AG04450 (cell line): ENCODE measurements at regions of chr6 and their contacts with region 1.

Region 1: GRCh38 chr6:32947552-32948465 is 5.1 kb downstream of the HLA-DMA start:
- DNase-seq: no peak
- H3K4me3 ChIP-seq: no peak overlapping the region
- H3K27ac ChIP-seq: no peak overlapping the region
- H3K27me3 ChIP-seq: no peaks in the 10 kb centered on the region
- CTCF ChIP-seq: peak; percentile 56

Region 2: DNA sequence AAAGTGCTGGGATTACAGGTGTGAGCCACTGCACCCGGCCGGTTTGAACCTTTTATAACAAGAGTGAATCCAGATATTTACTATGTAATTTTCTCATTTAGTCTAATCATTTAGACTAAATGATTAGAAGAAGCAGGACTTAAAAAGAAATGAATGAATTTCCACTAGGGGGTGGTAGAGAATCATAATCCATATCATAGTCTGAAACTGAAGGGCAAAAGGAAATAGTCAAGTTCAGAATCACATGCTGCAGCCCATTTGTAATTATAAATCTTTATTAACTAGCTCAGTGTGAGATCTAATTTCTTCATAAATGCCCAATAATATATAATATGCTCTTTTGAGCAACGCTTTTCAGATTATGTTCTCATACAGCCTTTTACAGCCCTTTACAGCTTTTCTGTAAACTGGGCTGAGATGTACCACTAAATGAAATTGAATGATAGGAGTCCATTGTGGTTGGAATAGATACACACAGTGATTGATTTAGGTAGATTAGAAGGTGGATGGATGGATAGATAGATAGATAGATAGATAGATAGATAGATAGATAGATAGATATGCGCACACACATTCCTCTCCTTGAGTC is 62.0 kb before region 1 on chr6:
- CTCF ChIA-PET with region 1: interaction called, 72 read pairs
- POLR2A ChIA-PET with region 1: no interaction called
- DNase-seq: no peak
- H3K4me3 ChIP-seq: no peak overlapping the region
- H3K27ac ChIP-seq: no peak overlapping the region
- H3K27me3 ChIP-seq: peaks cover 2% of the 10 kb centered on the region
- CTCF ChIP-seq: peak; percentile 63

Region 3: DNA sequence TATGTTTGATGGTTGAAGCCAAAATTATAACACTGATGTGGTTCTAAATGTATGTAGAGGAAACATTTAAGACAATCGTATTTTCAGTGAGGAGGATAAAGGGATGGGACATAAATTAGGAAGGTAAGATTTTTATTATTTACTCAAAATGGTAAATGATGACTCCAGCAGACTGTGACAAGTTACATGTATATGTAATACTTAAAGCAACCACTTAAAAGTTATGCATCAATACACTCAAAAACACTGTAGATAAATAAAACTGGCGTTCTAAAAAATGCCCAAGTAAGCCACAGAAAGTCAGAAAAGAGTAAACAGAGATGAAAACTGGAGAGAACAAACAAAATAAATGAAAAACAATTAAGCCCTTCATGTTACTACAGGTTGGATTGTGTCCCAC is 25.7 kb before region 1 on chr6:
- CTCF ChIA-PET with region 1: no interaction called
- POLR2A ChIA-PET with region 1: no interaction called
- DNase-seq: no peak
- H3K4me3 ChIP-seq: no peak overlapping the region
- H3K27ac ChIP-seq: no peak overlapping the region
- H3K27me3 ChIP-seq: peaks cover 18% of the 10 kb centered on the region
- CTCF ChIP-seq: no peak

Region 4: DNA sequence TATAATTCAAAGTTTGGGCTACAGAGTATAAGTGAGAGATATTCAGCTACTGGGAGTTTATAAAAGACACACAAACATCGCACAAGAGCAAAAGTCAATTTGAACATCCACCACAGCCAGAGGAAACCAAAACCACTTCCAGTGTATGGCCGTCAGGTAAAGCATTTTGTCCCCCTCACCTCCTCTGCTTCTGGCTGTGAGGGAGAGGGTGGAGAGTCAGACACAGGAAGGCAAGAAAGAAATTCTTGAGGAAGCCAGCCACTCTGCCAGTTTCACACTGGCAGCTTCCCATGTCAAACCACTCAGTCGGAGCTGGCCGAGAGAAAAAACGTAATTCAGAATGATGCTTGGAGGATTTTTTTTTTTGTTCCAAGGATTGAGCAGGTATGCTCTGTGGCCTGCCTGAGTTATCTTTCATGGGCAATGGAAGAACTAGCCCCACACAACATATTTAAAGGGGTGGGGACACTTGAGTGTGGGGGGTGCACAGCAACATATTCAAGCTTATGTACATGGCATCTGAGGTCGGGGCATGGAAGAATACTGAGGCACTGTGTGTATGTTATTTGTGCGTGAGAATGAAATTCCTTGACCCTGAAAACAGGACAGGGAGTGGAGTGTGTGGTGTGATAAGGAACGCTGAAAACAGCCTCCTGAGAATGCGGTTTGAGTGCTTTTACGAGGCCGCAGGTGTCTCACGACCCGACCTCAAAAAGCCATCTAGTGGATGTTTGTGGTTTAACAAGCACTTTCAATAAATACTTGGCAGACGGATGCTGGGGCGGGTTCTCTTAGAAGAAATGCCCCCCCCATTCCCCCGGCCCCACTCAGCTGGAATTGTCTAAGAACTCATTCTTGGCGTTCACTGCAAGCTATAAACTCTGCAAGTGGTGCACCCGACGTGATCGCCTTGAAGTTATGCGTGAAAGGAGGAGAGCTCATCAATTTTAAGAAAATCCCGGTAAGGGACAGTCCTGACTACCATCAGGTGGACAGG is 397.2 kb after region 1 on chr6:
- CTCF ChIA-PET with region 1: no interaction called
- POLR2A ChIA-PET with region 1: no interaction called
- DNase-seq: peak; percentile 39
- H3K4me3 ChIP-seq: no peak overlapping the region
- H3K27ac ChIP-seq: no peak overlapping the region
- H3K27me3 ChIP-seq: peaks cover 3% of the 10 kb centered on the region
- CTCF ChIP-seq: peak; percentile 57

Region 5: DNA sequence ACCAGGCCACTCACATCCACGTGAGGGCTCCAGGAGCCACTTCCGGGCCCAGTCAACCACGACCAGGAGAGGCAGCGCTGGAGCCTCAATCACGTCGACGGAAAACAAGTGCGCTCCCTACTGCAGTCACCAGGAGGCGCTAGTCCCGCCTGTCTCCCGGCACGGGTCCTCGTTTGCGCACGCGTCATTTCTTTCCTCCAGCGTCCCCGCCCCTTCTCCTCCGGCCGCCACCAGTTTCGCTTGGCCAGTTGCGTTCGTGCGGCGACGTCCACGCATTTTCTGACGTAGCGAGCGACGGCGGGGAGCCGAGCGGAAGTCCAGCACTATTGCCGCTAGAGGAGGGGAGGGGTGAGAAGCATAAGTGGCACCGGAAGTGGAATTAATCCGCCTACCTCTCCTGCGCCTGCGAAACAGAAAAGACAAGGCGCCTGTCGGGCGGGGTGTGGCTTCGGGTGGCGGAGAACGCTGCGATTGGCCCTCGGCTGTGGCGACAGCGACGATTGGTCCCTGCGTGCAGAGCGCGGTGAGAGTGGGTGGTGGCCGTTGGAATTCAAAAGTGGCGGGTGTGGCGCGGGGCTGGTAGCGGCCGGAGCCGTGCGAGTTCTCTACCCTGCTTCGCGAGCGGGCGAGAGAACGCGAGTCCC is 443.6 kb after region 1 on chr6 and contains the start of gene KIFC1:
- CTCF ChIA-PET with region 1: no interaction called
- POLR2A ChIA-PET with region 1: no interaction called
- DNase-seq: peak; percentile 100
- H3K4me3 ChIP-seq: peak within 1 kb of the TSS; percentile 92
- H3K27ac ChIP-seq: peak within 1 kb of the TSS; percentile 89
- H3K27me3 ChIP-seq: no peaks in the 10 kb centered on the region
- CTCF ChIP-seq: peak; percentile 95
- polyA plus RNA-seq, gene KIFC1: 10.2 TPM in 2 replicates